ENCODE measurements at regions of chr12 and their contacts with region 1.

Region 1: GRCh38 chr12:65156366-65156841 is 13.0 kb upstream of the LEMD3 start:
- DNase-seq: peak in 2 of 5 donors; percentile 11 to 12
- H3K4me3 ChIP-seq: no peak overlapping the region
- H3K4me3 Mint-ChIP-seq: peak overlapping the region in 6 of 7 donors; percentile 1 to 59 (median 8)
- H3K27ac ChIP-seq: no peak overlapping the region
- H3K27ac Mint-ChIP-seq: peak overlapping the region in 7 of 8 donors; percentile 2 to 77 (median 29)
- H3K4me1 ChIP-seq: peaks cover 10% of the 10 kb centered on the region
- H3K4me1 Mint-ChIP-seq: peaks cover 11 to 16% (median 16%) of the 10 kb centered on the region in 3 donors
- H3K27me3 ChIP-seq: no peaks in the 10 kb centered on the region
- H3K27me3 Mint-ChIP-seq: peaks cover 7 to 20% of the 10 kb centered on the region in 2 donors

Region 2: DNA sequence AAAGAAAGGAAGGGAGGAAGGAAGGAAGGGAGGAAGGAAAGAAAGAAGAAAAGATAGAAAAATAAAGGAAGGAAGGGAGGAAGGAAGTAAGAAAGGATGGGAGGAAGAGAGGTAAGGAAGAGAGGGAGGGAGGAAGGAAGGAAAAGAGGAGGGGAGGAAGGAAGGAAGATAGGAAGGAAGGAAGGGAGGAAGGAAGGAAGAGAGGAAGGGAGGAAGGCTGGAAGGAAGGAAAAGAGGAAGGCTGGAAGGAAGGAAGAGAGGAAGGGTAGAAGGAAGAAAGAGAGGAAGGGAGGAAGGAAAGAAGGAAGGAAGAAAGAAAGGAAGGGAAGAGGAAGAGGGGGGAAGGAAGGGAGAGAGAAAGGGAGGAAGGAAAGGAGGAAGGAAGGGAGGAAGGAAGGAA is 22.5 kb before region 1 on chr12:
- CTCF ChIA-PET with region 1: no interaction called
- POLR2A ChIA-PET with region 1: no interaction called
- DNase-seq: no peak
- H3K4me3 ChIP-seq: no peak overlapping the region
- H3K4me3 Mint-ChIP-seq: no peak overlapping the region
- H3K27ac ChIP-seq: no peak overlapping the region
- H3K27ac Mint-ChIP-seq: no peak overlapping the region
- H3K4me1 ChIP-seq: no peaks in the 10 kb centered on the region
- H3K4me1 Mint-ChIP-seq: no peaks in the 10 kb centered on the region
- H3K27me3 ChIP-seq: peaks cover 4% of the 10 kb centered on the region
- H3K27me3 Mint-ChIP-seq: peaks cover 6 to 37% of the 10 kb centered on the region in 2 donors

Region 3: GRCh38 chr12:65169320-65170208 is 13.2 kb after region 1 on chr12 and contains the start of gene LEMD3:
- CTCF ChIA-PET with region 1: interaction called, 19 read pairs
- POLR2A ChIA-PET with region 1: interaction called, 22 read pairs
- DNase-seq: peak; percentile 91 to 96 (median 93)
- H3K4me3 ChIP-seq: peak within 1 kb of the TSS; percentile 79
- H3K4me3 Mint-ChIP-seq: peak within 1 kb of the TSS; percentile 94 to 100 (median 99)
- H3K27ac ChIP-seq: peak within 1 kb of the TSS; percentile 81
- H3K27ac Mint-ChIP-seq: peak within 1 kb of the TSS; percentile 98 to 100 (median 100)
- H3K4me1 ChIP-seq: peaks cover 44% of the 10 kb centered on the region
- H3K4me1 Mint-ChIP-seq: peaks cover 13 to 40% (median 22%) of the 10 kb centered on the region in 3 donors
- H3K27me3 ChIP-seq: no peaks in the 10 kb centered on the region
- H3K27me3 Mint-ChIP-seq: peaks cover 4% of the 10 kb centered on the region in 2 donors
- total RNA-seq, gene LEMD3: 26.4 to 26.8 TPM